Activated naive CD4-positive, alpha-beta T cell treated with anti-CD3 and anti-CD28 coated beads for 36 hours (primary cell): ENCODE measurements at regions of chr3 and their contacts with region 1.

Region 1: DNA sequence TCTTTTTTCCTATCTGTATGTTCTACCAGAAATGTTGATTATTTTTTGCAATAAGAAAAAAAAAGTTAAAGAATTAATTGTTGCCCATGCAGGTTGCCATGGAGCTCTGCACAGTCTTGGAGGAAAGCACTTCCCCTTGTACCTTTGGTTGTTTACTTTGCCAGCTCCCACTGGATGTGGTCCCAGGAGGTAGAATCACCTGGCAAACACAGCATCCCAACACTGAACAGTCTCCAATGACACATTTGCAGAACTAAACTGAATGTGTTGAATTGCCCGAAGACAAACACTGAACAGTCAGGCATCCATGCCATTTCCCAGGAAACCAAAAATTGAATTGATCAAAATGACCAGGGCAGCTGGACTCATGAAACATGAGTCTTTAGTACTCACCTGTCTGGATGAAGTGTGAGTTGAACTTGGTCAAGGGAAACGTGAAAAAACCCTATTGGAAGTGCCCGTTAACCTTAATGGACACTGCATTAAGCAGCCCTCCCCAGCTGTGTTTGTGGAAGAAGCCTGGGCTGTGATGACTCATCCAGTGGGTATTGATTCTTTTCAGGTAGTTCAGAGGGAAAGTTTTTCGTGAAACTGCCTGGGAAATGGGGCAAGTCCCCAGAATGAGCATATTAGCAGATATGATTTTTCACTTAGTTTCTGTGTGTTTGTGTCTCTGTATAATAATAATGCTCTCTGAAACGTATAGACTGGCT is 284.7 kb upstream of the STT3B start:
- DNase-seq: peak; percentile 73
- H3K4me3 Mint-ChIP-seq: no peak overlapping the region
- H3K27ac Mint-ChIP-seq: no peak overlapping the region
- H3K4me1 Mint-ChIP-seq: peaks cover 53% of the 10 kb centered on the region
- H3K27me3 Mint-ChIP-seq: peaks cover 4% of the 10 kb centered on the region

Region 2: GRCh38 chr3:29683018-29683993 is 1564.7 kb before region 1 on chr3:
- CTCF ChIA-PET with region 1: no interaction called
- intact Hi-C with region 1: loop called (anchors 10 kb)
- DNase-seq: no peak
- H3K4me3 Mint-ChIP-seq: no peak overlapping the region
- H3K27ac Mint-ChIP-seq: no peak overlapping the region
- H3K4me1 Mint-ChIP-seq: peaks cover 8% of the 10 kb centered on the region
- H3K27me3 Mint-ChIP-seq: peaks cover 7% of the 10 kb centered on the region

Region 3: GRCh38 chr3:31185062-31185357 is 63.0 kb before region 1 on chr3:
- CTCF ChIA-PET with region 1: no interaction called
- intact Hi-C with region 1: no loop called
- DNase-seq: no peak
- H3K4me3 Mint-ChIP-seq: no peak overlapping the region
- H3K27ac Mint-ChIP-seq: no peak overlapping the region
- H3K4me1 Mint-ChIP-seq: peaks cover 2% of the 10 kb centered on the region
- H3K27me3 Mint-ChIP-seq: no peaks in the 10 kb centered on the region

Region 4: DNA sequence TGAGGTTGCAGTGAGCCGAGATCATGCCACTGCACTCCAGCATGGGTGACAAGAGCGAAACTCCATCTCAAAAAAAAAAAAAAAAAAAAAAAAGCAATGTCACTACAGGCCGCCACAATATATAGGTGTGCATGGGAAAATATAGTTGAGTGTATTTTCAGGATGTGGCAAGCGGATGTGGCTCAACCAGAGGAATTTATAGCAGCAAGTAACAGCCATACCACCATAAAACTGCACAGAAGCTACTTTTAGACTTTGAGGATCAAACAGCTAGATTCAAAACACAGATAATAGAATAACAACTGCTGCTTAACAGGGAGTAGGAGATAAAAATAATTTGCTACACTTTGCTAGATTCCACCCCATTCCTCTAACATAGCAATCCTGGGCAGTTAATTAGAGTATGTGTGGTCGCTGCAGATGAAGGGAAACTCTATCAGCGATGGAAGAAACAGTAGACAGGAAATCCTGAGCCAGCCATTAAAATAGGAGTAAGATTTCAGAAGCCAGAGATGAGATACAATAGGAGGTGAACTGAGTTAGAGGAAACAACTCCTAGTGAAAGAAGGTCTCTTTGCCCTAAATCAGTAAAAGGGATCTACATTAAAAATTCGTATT is 34.0 kb before region 1 on chr3:
- CTCF ChIA-PET with region 1: interaction called, 5 read pairs
- intact Hi-C with region 1: loop called (anchors 1 kb)
- DNase-seq: peak; percentile 49
- H3K4me3 Mint-ChIP-seq: no peak overlapping the region
- H3K27ac Mint-ChIP-seq: peak overlapping the region; percentile 3
- H3K4me1 Mint-ChIP-seq: peaks cover 88% of the 10 kb centered on the region
- H3K27me3 Mint-ChIP-seq: no peaks in the 10 kb centered on the region

Region 5: DNA sequence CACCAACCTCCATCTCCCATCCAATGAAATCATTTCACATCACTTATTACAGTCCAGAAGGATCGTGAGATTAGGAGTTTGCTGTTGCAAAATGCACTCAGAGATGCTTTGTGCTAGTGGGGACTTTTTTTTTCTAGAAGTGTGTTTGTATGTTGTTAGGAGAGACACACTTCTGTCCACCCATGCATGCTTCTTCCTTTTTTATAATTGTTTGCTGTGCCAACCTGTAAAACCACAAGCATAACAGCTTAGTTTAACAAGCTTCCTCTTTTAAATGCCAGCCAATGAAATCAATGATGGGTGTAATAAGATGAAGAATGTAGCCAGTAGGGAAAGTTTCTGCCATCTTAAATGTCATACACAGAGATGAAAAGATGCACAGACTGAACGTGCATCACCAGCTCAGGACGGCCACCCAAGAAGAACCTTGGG is 20.9 kb before region 1 on chr3:
- CTCF ChIA-PET with region 1: no interaction called
- intact Hi-C with region 1: loop called (anchors 1 kb)
- DNase-seq: no peak
- H3K4me3 Mint-ChIP-seq: no peak overlapping the region
- H3K27ac Mint-ChIP-seq: peak overlapping the region; percentile 64
- H3K4me1 Mint-ChIP-seq: peaks cover 87% of the 10 kb centered on the region
- H3K27me3 Mint-ChIP-seq: no peaks in the 10 kb centered on the region

Region 6: DNA sequence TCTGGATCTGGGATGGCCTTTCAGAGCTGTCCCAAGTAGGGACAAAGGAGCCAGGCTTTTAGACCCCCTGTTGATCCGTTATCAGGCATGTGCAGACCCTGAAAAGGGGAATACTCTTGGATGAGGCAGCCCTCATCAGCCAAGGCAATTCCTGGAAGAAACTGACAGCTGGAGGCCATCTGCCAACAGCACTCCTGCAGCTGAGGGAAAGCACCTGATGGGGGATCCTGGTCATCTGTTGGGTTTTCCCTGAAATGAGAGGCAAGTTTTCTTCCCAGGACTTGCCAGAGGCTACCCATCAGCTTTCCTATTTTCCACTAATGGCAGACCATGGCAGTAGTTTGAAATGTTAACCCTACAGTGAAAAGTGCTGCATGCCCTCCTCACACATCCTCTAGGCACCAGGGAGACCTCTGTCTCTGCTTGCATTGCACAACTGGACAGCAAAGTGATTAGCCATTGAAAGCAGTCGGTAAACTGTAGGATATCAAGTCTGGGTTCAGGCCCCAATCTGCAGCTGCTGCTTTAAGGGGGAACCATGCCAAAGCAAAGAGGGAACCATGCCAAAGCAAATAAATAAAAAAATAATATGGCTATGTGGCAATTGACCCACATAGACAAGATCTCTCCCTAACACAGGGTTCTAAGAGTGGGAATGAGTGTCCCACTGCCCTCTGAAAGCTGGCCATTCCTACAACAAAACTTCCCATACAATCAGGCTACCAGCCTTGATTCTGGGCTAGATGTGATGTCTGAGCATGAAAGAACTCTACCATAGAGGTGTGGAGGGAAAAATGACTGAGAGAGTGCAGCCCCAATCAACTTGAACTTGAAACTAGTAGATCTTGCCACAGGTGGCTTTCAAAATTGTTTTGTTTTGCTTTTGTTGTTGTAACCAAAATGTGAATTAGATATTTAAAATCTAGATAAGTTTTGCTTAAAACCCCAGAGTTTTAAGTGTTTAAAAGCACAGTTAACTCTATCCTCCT is 52.7 kb after region 1 on chr3:
- CTCF ChIA-PET with region 1: no interaction called
- intact Hi-C with region 1: no loop called
- DNase-seq: no peak
- H3K4me3 Mint-ChIP-seq: no peak overlapping the region
- H3K27ac Mint-ChIP-seq: no peak overlapping the region
- H3K4me1 Mint-ChIP-seq: no peaks in the 10 kb centered on the region
- H3K27me3 Mint-ChIP-seq: no peaks in the 10 kb centered on the region

Region 7: GRCh38 chr3:31311559-31311958 is 63.6 kb after region 1 on chr3:
- CTCF ChIA-PET with region 1: no interaction called
- intact Hi-C with region 1: no loop called
- DNase-seq: no peak
- H3K4me3 Mint-ChIP-seq: no peak overlapping the region
- H3K27ac Mint-ChIP-seq: no peak overlapping the region
- H3K4me1 Mint-ChIP-seq: peaks cover 12% of the 10 kb centered on the region
- H3K27me3 Mint-ChIP-seq: no peaks in the 10 kb centered on the region

Region 8: GRCh38 chr3:31377045-31377642 is 129.1 kb after region 1 on chr3:
- CTCF ChIA-PET with region 1: interaction called, 3 read pairs
- intact Hi-C with region 1: loop called (anchors 5 kb)
- DNase-seq: peak; percentile 56
- H3K4me3 Mint-ChIP-seq: no peak overlapping the region
- H3K27ac Mint-ChIP-seq: peak overlapping the region; percentile 25
- H3K4me1 Mint-ChIP-seq: peaks cover 13% of the 10 kb centered on the region
- H3K27me3 Mint-ChIP-seq: no peaks in the 10 kb centered on the region

Region 9: DNA sequence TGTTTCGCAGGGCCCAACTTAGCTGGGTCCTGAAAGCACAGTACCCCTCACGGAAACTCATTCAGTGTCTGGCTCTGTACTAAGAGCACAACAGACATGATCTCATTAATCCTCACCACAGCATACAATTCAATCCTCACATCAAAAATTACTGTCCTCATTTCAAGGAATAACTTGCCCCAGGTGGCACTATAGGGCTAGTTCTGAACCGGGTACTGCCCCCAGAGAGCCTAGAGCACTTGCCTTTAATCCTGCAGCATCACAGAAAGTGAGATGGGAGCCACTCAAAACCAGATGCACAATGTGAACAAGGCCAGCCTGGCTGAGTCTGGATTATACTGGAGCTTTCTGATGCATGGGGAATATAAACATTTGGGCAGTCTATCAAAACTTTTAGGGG is 610.4 kb after region 1 on chr3:
- CTCF ChIA-PET with region 1: no interaction called
- intact Hi-C with region 1: no loop called
- DNase-seq: peak; percentile 14
- H3K4me3 Mint-ChIP-seq: no peak overlapping the region
- H3K27ac Mint-ChIP-seq: no peak overlapping the region
- H3K4me1 Mint-ChIP-seq: no peaks in the 10 kb centered on the region
- H3K27me3 Mint-ChIP-seq: peaks cover 7% of the 10 kb centered on the region

Region 10: DNA sequence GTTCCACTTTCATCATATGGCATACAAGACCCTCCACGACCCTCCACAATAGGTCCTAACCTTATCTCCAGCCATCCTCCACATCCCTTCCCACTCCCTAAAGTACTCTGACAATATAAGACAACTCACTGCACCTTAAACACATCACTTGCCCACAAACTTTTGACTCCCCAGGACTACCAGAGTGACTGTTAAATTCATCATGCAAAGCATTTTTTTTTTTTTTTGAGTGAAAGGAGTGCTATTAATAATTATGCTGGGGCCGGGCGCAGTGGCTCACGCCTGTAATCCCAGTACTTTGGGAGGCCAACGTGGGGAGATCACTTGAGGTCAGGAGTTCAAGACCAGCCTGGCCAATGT is 677.2 kb after region 1 on chr3:
- CTCF ChIA-PET with region 1: no interaction called
- intact Hi-C with region 1: loop called (anchors 5 kb)
- DNase-seq: peak; percentile 9
- H3K4me3 Mint-ChIP-seq: no peak overlapping the region
- H3K27ac Mint-ChIP-seq: no peak overlapping the region
- H3K4me1 Mint-ChIP-seq: peaks cover 23% of the 10 kb centered on the region
- H3K27me3 Mint-ChIP-seq: no peaks in the 10 kb centered on the region